ENCODE measurements at regions of chr21 and their contacts with region 1.

Region 1: DNA sequence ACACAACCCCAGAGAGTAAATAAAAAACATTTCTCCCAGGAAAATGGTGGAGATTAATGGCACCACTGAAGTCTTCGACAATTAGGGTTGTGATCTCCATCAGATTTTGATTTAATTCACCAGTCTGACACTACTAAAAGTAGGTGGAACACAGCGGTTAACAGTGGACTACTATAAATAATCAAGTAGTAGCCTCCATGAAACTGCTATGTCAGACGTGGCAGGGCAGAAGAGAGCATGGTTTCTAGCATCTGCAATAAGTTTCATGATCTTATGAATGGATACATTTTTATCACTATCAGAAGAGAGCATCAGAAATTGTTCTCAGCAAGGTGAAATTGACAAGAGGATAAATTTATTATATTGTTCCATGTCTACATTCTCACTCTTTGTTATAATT is 1706.6 kb downstream of the MRPL39 start:
- DNase-seq: no peak
- ATAC-seq: no peak
- H3K4me3 ChIP-seq: no peak overlapping the region
- H3K27ac ChIP-seq: no peak overlapping the region
- H3K4me1 ChIP-seq: no peaks in the 10 kb centered on the region
- H3K27me3 ChIP-seq: no peaks in the 10 kb centered on the region
- CTCF ChIP-seq: no peak
- POLR2A ChIP-seq: no peak
- RAD21 ChIP-seq: no peak

Region 2: GRCh38 chr21:22409571-22409970 is 1491.2 kb before region 1 on chr21:
- CTCF ChIA-PET with region 1: no interaction called
- POLR2A ChIA-PET with region 1: no interaction called
- dilution Hi-C with region 1: no loop called
- in situ Hi-C with region 1: no loop called
- intact Hi-C with region 1: loop called (anchors 5 kb)
- DNase-seq: no peak
- ATAC-seq: no peak
- H3K4me3 ChIP-seq: no peak overlapping the region
- H3K27ac ChIP-seq: no peak overlapping the region
- H3K4me1 ChIP-seq: no peaks in the 10 kb centered on the region
- H3K27me3 ChIP-seq: no peaks in the 10 kb centered on the region
- CTCF ChIP-seq: no peak
- POLR2A ChIP-seq: no peak
- RAD21 ChIP-seq: no peak

Region 3: DNA sequence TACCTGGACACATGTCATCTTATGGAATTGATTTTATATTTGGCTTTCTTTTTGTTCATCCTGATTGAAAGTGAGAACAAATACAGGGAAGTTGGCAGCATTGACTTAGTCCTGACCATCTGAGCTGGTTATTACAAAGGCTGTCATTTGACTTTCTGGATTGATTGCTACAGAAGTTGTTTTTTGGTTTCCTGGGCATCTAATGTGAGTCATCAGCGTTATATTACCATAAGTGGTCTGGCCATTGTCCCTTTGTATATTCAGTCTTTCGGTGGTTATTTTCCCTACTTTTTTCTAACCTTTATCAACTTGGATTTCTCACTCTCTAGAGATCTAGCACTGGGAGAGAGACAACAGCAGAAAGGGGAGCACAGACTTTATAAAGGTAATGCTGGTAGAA is 60.0 kb after region 1 on chr21:
- CTCF ChIA-PET with region 1: no interaction called
- POLR2A ChIA-PET with region 1: no interaction called
- dilution Hi-C with region 1: no loop called
- in situ Hi-C with region 1: no loop called
- intact Hi-C with region 1: no loop called
- DNase-seq: no peak
- ATAC-seq: no peak
- H3K4me3 ChIP-seq: no peak overlapping the region
- H3K27ac ChIP-seq: no peak overlapping the region
- H3K4me1 ChIP-seq: no peaks in the 10 kb centered on the region
- H3K27me3 ChIP-seq: no peaks in the 10 kb centered on the region
- CTCF ChIP-seq: no peak
- POLR2A ChIP-seq: no peak
- RAD21 ChIP-seq: no peak